Activated B cell treated with CpG ODN at 0.5 μM for 24 hours (primary cell): ENCODE measurements at regions of chr16 and their contacts with region 1.

Region 1: DNA sequence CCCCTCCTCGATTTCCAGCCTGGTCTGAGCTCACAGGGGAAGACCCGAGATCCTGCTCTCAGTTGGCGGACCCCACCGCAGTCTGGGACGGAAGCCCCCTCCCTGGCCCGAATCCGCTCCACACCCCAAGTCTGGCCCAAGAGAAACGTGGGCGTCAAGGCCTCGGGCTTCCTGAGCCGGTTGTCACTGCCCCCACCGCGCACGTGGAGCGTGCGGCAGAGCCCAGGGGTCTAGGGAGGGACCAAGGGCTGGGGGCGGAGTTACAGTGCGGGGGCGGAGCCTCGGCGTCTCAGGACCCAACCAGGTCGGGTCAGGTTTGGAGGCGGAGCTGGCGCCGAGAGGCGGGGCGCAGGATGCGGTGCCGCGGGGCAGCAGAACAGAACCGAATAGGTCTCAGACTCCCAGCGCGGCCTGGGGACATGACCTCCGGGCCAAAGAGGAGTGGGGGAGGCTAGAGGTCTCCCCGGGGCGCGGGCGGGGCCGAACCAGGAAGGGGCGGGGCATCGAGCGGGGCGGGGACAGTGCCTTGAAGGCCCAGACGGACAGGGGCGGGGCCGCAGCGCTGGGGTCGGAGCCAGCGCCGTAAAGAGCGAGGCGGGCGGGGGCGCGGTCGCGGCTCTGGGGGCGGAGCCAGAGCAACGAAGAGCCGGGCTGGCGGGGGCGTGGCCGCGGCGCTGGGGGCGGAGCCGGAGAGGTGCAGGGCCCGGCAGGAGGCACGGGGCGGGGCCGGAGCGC is 431 bp upstream of the ZFPM1 start:
- DNase-seq: peak; percentile 100
- ATAC-seq: peak; percentile 71
- H3K4me3 Mint-ChIP-seq: peak overlapping the region; percentile 87
- H3K27ac Mint-ChIP-seq: peak overlapping the region; percentile 80
- H3K4me1 Mint-ChIP-seq: peaks cover 57% of the 10 kb centered on the region
- H3K27me3 Mint-ChIP-seq: no peaks in the 10 kb centered on the region
- CTCF ChIP-seq: no peak

Region 2: GRCh38 chr16:88045820-88046303 is 406.8 kb before region 1 on chr16:
- CTCF ChIA-PET with region 1: no interaction called
- POLR2A ChIA-PET with region 1: interaction called, 4 read pairs
- intact Hi-C with region 1: loop called (anchors 10 kb)
- DNase-seq: peak; percentile 83
- ATAC-seq: peak; percentile 72
- H3K4me3 Mint-ChIP-seq: peak overlapping the region; percentile 77
- H3K27ac Mint-ChIP-seq: peak overlapping the region; percentile 98
- H3K4me1 Mint-ChIP-seq: peaks cover 83% of the 10 kb centered on the region
- H3K27me3 Mint-ChIP-seq: no peaks in the 10 kb centered on the region
- CTCF ChIP-seq: no peak

Region 3: GRCh38 chr16:88479793-88480760 is 27.4 kb after region 1 on chr16:
- CTCF ChIA-PET with region 1: interaction called, 3 read pairs
- POLR2A ChIA-PET with region 1: interaction called, 29 read pairs
- intact Hi-C with region 1: loop called (anchors 1 kb)
- DNase-seq: peak; percentile 58
- ATAC-seq: peak; percentile 75
- H3K4me3 Mint-ChIP-seq: peak overlapping the region; percentile 68
- H3K27ac Mint-ChIP-seq: peak overlapping the region; percentile 80
- H3K4me1 Mint-ChIP-seq: peaks cover 61% of the 10 kb centered on the region
- H3K27me3 Mint-ChIP-seq: no peaks in the 10 kb centered on the region
- CTCF ChIP-seq: no peak

Region 4: GRCh38 chr16:88633684-88634140 is 181.1 kb after region 1 on chr16:
- CTCF ChIA-PET with region 1: no interaction called
- POLR2A ChIA-PET with region 1: no interaction called
- intact Hi-C with region 1: loop called (anchors 1 kb)
- DNase-seq: peak; percentile 64
- ATAC-seq: peak; percentile 54
- H3K4me3 Mint-ChIP-seq: peak overlapping the region; percentile 76
- H3K27ac Mint-ChIP-seq: peak overlapping the region; percentile 71
- H3K4me1 Mint-ChIP-seq: peaks cover 46% of the 10 kb centered on the region
- H3K27me3 Mint-ChIP-seq: no peaks in the 10 kb centered on the region
- CTCF ChIP-seq: no peak

Region 5: DNA sequence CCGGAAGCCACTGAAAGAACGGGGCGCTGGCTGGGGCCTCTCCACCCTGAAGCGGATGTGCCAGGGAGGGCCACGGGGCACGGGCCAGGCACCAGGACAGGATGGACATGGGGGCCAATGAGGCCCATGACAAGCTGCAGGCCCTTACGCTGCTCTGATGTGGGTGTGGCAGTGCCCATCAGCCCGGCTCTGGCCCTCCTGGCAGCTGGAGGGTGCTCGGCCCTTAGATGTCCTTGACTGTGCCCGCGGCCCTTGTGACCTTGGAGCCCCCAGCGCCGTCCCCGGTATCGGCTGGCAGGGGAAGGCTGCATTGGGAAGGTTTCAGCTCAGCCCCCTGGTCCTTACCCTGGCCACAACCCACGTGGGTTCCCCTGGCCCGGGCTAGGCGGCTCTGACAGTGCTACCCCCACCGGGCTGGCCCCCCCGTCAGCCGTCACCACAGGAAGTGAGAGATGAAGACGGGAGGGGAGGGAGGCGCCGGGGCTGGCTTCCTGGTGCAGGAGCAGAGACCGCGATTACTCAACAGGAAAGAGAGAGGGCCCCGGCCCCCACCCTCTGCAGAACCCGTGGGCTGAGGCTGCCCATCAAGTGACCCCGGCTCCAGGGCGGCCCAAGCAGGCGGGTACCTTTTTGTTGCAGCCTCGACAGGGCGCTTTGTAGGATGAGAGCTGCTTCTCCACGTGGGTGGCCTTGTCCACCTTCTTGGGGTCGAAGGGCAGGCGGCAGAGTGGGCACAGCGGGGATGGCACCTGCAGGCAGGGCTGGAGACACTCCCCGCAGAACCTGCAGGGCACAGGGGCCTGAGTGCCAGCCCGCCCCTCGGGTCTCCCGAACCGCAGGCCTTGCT is 248.2 kb after region 1 on chr16:
- CTCF ChIA-PET with region 1: no interaction called
- POLR2A ChIA-PET with region 1: no interaction called
- intact Hi-C with region 1: loop called (anchors 5 kb)
- DNase-seq: peak; percentile 86
- ATAC-seq: peak; percentile 81
- H3K4me3 Mint-ChIP-seq: peak overlapping the region; percentile 81
- H3K27ac Mint-ChIP-seq: peak overlapping the region; percentile 90
- H3K4me1 Mint-ChIP-seq: peaks cover 73% of the 10 kb centered on the region
- H3K27me3 Mint-ChIP-seq: no peaks in the 10 kb centered on the region
- CTCF ChIP-seq: no peak

Region 6: GRCh38 chr16:89171463-89172170 is 719.0 kb after region 1 on chr16 and contains the start of gene CDH15:
- CTCF ChIA-PET with region 1: no interaction called
- POLR2A ChIA-PET with region 1: no interaction called
- intact Hi-C with region 1: loop called (anchors 10 kb)
- DNase-seq: peak; percentile 84
- ATAC-seq: peak; percentile 96
- H3K4me3 Mint-ChIP-seq: peak within 1 kb of the TSS; percentile 66
- H3K27ac Mint-ChIP-seq: no peak within 1 kb of the TSS
- H3K4me1 Mint-ChIP-seq: peaks cover 12% of the 10 kb centered on the region
- H3K27me3 Mint-ChIP-seq: peaks cover 2% of the 10 kb centered on the region
- CTCF ChIP-seq: no peak
- total RNA-seq, gene CDH15: not detected in 2 replicates